ENCODE measurements at regions of chrX and their contacts with region 1.

Region 1: GRCh38 chrX:57821703-57822375 is 88.4 kb downstream of the ZXDA start:
- DNase-seq: peak in 8 of 9 donors; percentile 20 to 59 (median 46)
- ATAC-seq: peak; percentile 63
- H3K4me3 ChIP-seq: no peak overlapping the region
- H3K4me3 Mint-ChIP-seq: peak overlapping the region in 2 of 10 donors; percentile 35 to 49
- H3K27ac ChIP-seq: no peak overlapping the region
- H3K27ac Mint-ChIP-seq: no peak overlapping the region
- H3K4me1 ChIP-seq: no peaks in the 10 kb centered on the region
- H3K4me1 Mint-ChIP-seq: peaks cover 0 to 5% (median 4%) of the 10 kb centered on the region in 7 donors
- H3K27me3 ChIP-seq: no peaks in the 10 kb centered on the region
- H3K27me3 Mint-ChIP-seq: peaks cover 0 to 5% (median 0%) of the 10 kb centered on the region in 5 donors

Region 2: DNA sequence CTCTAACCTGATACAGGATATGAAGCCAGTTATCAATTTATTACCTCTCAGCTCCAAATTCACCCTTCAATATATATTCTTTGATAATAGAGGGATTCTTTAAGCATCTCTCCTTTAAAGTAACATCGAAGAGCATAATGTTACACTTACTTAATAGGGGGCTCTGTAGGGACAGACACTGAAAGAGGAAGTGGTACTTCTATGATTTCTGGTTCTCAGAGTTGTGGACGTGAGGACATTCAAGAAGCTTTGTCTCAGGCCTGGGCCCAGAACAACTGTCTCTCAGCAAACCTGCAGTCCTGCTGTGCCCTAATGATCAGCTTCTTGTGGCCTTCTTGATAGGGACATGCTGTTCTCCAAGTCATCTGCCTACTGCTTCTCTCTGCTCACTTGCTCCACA is 234.2 kb before region 1 on chrX:
- CTCF ChIA-PET with region 1: no interaction called
- POLR2A ChIA-PET with region 1: no interaction called
- intact Hi-C with region 1: loop called in 1 of 2 experiments (anchors 5 kb)
- DNase-seq: no peak
- ATAC-seq: no peak
- H3K4me3 ChIP-seq: no peak overlapping the region
- H3K4me3 Mint-ChIP-seq: peak overlapping the region in 1 of 10 donors; percentile 45
- H3K27ac ChIP-seq: no peak overlapping the region
- H3K27ac Mint-ChIP-seq: no peak overlapping the region
- H3K4me1 ChIP-seq: peaks cover 6 to 8% of the 10 kb centered on the region in 2 donors
- H3K4me1 Mint-ChIP-seq: peaks cover 0 to 33% (median 10%) of the 10 kb centered on the region in 7 donors
- H3K27me3 ChIP-seq: no peaks in the 10 kb centered on the region
- H3K27me3 Mint-ChIP-seq: no peaks in the 10 kb centered on the region

Region 3: DNA sequence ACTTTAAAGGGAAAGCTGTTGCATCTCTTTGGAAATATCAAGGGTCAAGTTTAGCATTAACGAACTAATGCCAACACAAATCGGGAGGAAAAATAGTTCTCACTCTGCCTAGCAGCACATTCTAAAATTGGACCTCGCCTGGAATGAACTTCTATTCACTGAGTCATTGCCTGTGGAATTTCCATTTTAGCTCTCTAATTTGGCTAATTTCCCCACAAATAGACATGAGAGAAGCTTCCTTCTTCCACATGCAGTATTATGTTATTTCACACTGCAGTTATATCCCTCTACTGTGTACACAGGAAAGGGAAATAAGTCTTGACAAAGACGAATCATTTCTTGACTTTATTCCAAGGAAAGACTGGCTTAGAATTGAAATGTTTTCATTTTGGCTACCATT is 79.1 kb after region 1 on chrX:
- CTCF ChIA-PET with region 1: no interaction called
- POLR2A ChIA-PET with region 1: no interaction called
- intact Hi-C with region 1: no loop called
- DNase-seq: no peak
- ATAC-seq: no peak
- H3K4me3 ChIP-seq: no peak overlapping the region
- H3K4me3 Mint-ChIP-seq: no peak overlapping the region
- H3K27ac ChIP-seq: no peak overlapping the region
- H3K27ac Mint-ChIP-seq: no peak overlapping the region
- H3K4me1 ChIP-seq: no peaks in the 10 kb centered on the region
- H3K4me1 Mint-ChIP-seq: peaks cover 1 to 15% (median 5%) of the 10 kb centered on the region in 7 donors
- H3K27me3 ChIP-seq: no peaks in the 10 kb centered on the region
- H3K27me3 Mint-ChIP-seq: no peaks in the 10 kb centered on the region

Region 4: DNA sequence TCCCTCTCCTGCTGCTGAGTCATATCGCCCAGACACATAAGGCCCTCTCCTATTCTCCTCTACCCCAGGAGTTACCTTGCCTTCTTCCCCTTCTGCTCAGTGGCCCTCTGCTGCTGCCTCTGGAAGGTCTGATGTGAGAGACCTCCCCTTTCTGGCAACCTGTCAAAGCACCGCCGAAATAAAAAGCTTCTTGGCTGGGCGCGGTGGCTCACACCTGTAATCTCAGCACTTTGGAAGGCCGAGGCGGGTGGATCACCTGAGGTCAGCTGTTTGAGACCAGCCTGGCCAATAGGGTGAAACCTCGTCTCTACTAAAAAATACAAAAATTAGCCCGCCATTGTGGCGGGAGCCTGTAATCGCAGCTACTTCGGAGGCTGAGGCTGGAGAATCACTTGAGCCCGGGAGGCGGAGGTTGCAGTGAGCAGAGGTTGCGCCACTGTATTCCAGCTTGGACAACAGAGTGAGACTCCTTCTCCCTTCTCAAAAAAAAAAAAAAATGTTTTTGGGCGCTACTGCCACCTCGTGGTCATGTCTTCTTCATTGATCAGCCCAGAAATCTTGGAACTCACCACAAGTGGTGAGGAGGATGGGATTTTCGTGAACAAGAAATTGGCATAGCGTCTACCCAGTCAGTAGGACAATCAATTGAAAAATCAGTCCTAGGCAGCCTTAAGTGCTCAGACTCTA is 97.1 kb after region 1 on chrX:
- CTCF ChIA-PET with region 1: interaction called, 3 read pairs
- POLR2A ChIA-PET with region 1: no interaction called
- intact Hi-C with region 1: loop called (anchors 1 kb)
- DNase-seq: peak in 6 of 9 donors; percentile 13 to 37 (median 29)
- ATAC-seq: peak; percentile 54
- H3K4me3 ChIP-seq: no peak overlapping the region
- H3K4me3 Mint-ChIP-seq: no peak overlapping the region
- H3K27ac ChIP-seq: no peak overlapping the region
- H3K27ac Mint-ChIP-seq: peak overlapping the region in 1 of 9 donors; percentile 25
- H3K4me1 ChIP-seq: no peaks in the 10 kb centered on the region
- H3K4me1 Mint-ChIP-seq: no peaks in the 10 kb centered on the region
- H3K27me3 ChIP-seq: no peaks in the 10 kb centered on the region
- H3K27me3 Mint-ChIP-seq: no peaks in the 10 kb centered on the region

Region 5: DNA sequence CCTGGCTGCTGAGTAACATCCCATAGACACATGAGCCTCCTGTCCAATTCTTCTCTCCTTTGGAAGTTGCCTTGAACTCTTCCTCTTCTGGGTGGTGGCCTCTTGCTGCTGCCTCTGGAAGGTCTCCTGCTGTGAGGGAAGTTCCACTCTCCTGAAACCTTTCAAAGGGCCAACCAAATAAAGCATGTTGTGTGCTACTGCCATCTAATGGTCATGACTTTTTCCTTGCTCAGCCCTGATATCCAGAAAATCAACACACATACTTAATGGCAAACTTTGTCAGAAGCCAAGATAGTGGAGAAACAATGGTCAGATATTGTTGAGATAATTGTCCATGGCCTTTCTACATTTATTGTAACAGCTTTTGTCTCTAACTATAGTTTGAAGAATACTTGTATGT is 107.5 kb after region 1 on chrX:
- CTCF ChIA-PET with region 1: interaction called, 3 read pairs
- POLR2A ChIA-PET with region 1: no interaction called
- intact Hi-C with region 1: loop called (anchors 1 kb)
- DNase-seq: peak in 2 of 9 donors; percentile 9 to 12
- ATAC-seq: no peak
- H3K4me3 ChIP-seq: no peak overlapping the region
- H3K4me3 Mint-ChIP-seq: no peak overlapping the region
- H3K27ac ChIP-seq: no peak overlapping the region
- H3K27ac Mint-ChIP-seq: no peak overlapping the region
- H3K4me1 ChIP-seq: no peaks in the 10 kb centered on the region
- H3K4me1 Mint-ChIP-seq: peaks cover 0 to 4% (median 0%) of the 10 kb centered on the region in 7 donors
- H3K27me3 ChIP-seq: no peaks in the 10 kb centered on the region
- H3K27me3 Mint-ChIP-seq: no peaks in the 10 kb centered on the region

Measured in naive thymus-derived CD4-positive, alpha-beta T cell (primary cell).